ENCODE measurements at regions of chr2 and their contacts with region 1.

Region 1: GRCh38 chr2:190880378-190881073 is at the start of gene GLS:
- DNase-seq: peak; percentile 89 to 98 (median 96)
- ATAC-seq: peak; percentile 74 to 75
- H3K4me3 Mint-ChIP-seq: peak within 1 kb of the TSS; percentile 93 to 100 (median 99)
- H3K27ac Mint-ChIP-seq: peak within 1 kb of the TSS; percentile 95 to 100 (median 98)
- H3K4me1 Mint-ChIP-seq: peaks cover 25 to 63% (median 55%) of the 10 kb centered on the region in 4 donors
- H3K27me3 Mint-ChIP-seq: no peaks in the 10 kb centered on the region
- polyA plus RNA-seq, gene GLS: 30.0 to 55.9 (median 40.8) TPM

Region 2: DNA sequence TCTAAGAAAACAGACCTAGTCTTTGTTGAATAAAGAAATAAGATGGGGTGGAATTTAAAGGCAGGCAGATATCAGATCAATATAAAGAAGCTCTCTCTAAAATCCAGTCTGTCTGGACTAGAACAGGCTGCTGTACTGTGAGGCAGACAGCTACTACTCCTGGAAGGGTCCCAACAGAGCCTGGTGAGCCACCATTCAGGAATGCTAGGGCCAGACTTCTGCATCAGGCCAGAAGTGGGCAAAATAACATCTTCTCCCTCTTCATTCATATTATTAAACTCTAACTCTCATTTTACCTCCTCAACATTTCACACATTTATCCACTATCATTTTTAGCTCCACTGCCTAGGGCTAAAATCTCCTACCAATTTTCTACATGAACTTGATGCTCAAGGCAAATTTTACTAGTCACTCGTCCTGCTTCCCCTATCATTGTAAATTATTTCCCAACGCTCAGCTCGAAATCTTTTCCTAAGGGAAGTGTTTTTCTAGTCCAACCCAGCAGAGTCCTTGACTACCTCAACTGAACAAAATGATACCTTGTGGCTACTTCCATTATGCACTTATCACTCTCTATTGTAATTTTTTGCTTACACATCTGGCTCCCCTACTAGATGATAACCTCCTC is 45.1 kb before region 1 on chr2:
- POLR2A ChIA-PET with region 1: no interaction called
- DNase-seq: no peak
- ATAC-seq: no peak
- H3K4me3 Mint-ChIP-seq: no peak overlapping the region
- H3K27ac Mint-ChIP-seq: no peak overlapping the region
- H3K4me1 Mint-ChIP-seq: peaks cover 0 to 2% (median 0%) of the 10 kb centered on the region in 4 donors
- H3K27me3 Mint-ChIP-seq: no peaks in the 10 kb centered on the region

Region 3: GRCh38 chr2:190849774-190850173 is 30.8 kb before region 1 on chr2:
- POLR2A ChIA-PET with region 1: interaction called, 33 read pairs
- DNase-seq: no peak
- ATAC-seq: no peak
- H3K4me3 Mint-ChIP-seq: no peak overlapping the region
- H3K27ac Mint-ChIP-seq: no peak overlapping the region
- H3K4me1 Mint-ChIP-seq: peaks cover 0 to 4% (median 1%) of the 10 kb centered on the region in 4 donors
- H3K27me3 Mint-ChIP-seq: no peaks in the 10 kb centered on the region

Region 4: GRCh38 chr2:190891372-190891771 is 10.8 kb after region 1 on chr2:
- POLR2A ChIA-PET with region 1: interaction called, 26 read pairs
- DNase-seq: no peak
- ATAC-seq: no peak
- H3K4me3 Mint-ChIP-seq: peak overlapping the region in 7 of 10 donors; percentile 2 to 39 (median 15)
- H3K27ac Mint-ChIP-seq: peak overlapping the region in 8 of 10 donors; percentile 2 to 75 (median 56)
- H3K4me1 Mint-ChIP-seq: peaks cover 24 to 81% (median 58%) of the 10 kb centered on the region in 4 donors
- H3K27me3 Mint-ChIP-seq: no peaks in the 10 kb centered on the region

Region 5: GRCh38 chr2:190947711-190948251 is 67.3 kb after region 1 on chr2:
- POLR2A ChIA-PET with region 1: interaction called, 26 read pairs
- DNase-seq: peak in 7 of 10 donors; percentile 22 to 81 (median 53)
- ATAC-seq: peak; percentile 82 to 94
- H3K4me3 Mint-ChIP-seq: peak overlapping the region; percentile 31 to 75 (median 63)
- H3K27ac Mint-ChIP-seq: peak overlapping the region in 6 of 10 donors; percentile 75 to 96 (median 94)
- H3K4me1 Mint-ChIP-seq: peaks cover 0 to 31% (median 9%) of the 10 kb centered on the region in 4 donors
- H3K27me3 Mint-ChIP-seq: no peaks in the 10 kb centered on the region

Region 6: GRCh38 chr2:191020221-191020741 is 139.8 kb after region 1 on chr2:
- POLR2A ChIA-PET with region 1: interaction called, 22 read pairs
- DNase-seq: peak; percentile 84 to 95 (median 94)
- ATAC-seq: peak; percentile 75 to 83
- H3K4me3 Mint-ChIP-seq: no peak overlapping the region
- H3K27ac Mint-ChIP-seq: no peak overlapping the region
- H3K4me1 Mint-ChIP-seq: peaks cover 12 to 38% (median 22%) of the 10 kb centered on the region in 4 donors
- H3K27me3 Mint-ChIP-seq: peaks cover 0 to 2% (median 0%) of the 10 kb centered on the region in 5 donors